MCF 10A (cell line): ENCODE measurements at regions of chr4 and their contacts with region 1.

Region 1: DNA sequence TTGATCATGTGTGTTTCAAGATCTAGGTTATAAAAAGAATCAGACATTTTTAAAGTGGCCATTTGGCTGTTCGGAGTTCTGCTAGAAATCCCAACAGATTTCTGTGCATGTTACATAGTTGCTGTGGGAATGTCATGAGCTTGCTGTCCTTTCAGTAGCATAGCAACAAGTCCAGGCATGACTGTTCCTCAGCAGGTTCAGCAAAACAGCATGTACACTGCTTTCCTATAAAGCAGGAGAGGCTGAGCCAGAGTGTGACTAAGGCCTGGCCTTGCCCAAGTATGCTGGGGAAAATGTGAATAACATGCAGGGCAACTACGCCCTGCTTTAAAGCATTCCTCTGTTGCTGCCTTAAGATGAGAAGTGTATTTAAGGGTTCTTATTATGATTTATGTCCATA is 217.1 kb upstream of the SMIM31 start:
- DNase-seq: peak; percentile 91
- H3K4me3 Mint-ChIP-seq: peak overlapping the region; percentile 12
- H3K27ac Mint-ChIP-seq: peak overlapping the region; percentile 98
- H3K4me1 Mint-ChIP-seq: peaks cover 21% of the 10 kb centered on the region
- H3K27me3 Mint-ChIP-seq: no peaks in the 10 kb centered on the region
- CTCF ChIP-seq: no peak

Region 2: DNA sequence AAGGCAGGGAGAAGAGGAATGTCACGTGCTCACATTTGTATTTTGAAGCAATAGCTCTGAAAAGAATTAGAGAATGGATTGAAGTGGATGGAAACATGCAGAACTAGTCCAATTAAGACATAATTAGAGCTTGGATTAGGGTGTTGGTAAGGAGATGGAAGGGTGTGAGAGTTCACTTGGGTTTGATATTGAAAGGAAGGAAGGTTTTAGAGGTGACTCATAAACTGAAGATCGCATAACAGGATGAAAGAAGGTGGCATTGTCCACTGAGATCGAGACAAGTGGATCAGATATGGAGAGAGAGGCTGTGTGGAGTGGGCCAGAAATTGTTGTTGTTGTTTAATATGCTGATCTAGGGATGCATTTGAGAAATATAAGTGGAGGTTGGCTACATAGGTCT is 26.9 kb before region 1 on chr4:
- CTCF ChIA-PET with region 1: no interaction called
- POLR2A ChIA-PET with region 1: interaction called, 11 read pairs
- intact Hi-C with region 1: loop called (anchors 2 kb)
- DNase-seq: peak; percentile 63
- H3K4me3 Mint-ChIP-seq: no peak overlapping the region
- H3K27ac Mint-ChIP-seq: no peak overlapping the region
- H3K4me1 Mint-ChIP-seq: peaks cover 5% of the 10 kb centered on the region
- H3K27me3 Mint-ChIP-seq: no peaks in the 10 kb centered on the region
- CTCF ChIP-seq: no peak

Region 3: GRCh38 chr4:164572877-164573279 is 36.1 kb after region 1 on chr4:
- CTCF ChIA-PET with region 1: no interaction called
- POLR2A ChIA-PET with region 1: interaction called, 24 read pairs
- intact Hi-C with region 1: no loop called
- DNase-seq: peak; percentile 81
- H3K4me3 Mint-ChIP-seq: no peak overlapping the region
- H3K27ac Mint-ChIP-seq: peak overlapping the region; percentile 80
- H3K4me1 Mint-ChIP-seq: peaks cover 8% of the 10 kb centered on the region
- H3K27me3 Mint-ChIP-seq: no peaks in the 10 kb centered on the region
- CTCF ChIP-seq: no peak

Region 4: GRCh38 chr4:164621886-164622521 is 85.2 kb after region 1 on chr4:
- CTCF ChIA-PET with region 1: no interaction called
- POLR2A ChIA-PET with region 1: interaction called, 18 read pairs
- intact Hi-C with region 1: no loop called
- DNase-seq: peak; percentile 84
- H3K4me3 Mint-ChIP-seq: peak overlapping the region; percentile 12
- H3K27ac Mint-ChIP-seq: peak overlapping the region; percentile 75
- H3K4me1 Mint-ChIP-seq: peaks cover 17% of the 10 kb centered on the region
- H3K27me3 Mint-ChIP-seq: no peaks in the 10 kb centered on the region
- CTCF ChIP-seq: no peak

Region 5: DNA sequence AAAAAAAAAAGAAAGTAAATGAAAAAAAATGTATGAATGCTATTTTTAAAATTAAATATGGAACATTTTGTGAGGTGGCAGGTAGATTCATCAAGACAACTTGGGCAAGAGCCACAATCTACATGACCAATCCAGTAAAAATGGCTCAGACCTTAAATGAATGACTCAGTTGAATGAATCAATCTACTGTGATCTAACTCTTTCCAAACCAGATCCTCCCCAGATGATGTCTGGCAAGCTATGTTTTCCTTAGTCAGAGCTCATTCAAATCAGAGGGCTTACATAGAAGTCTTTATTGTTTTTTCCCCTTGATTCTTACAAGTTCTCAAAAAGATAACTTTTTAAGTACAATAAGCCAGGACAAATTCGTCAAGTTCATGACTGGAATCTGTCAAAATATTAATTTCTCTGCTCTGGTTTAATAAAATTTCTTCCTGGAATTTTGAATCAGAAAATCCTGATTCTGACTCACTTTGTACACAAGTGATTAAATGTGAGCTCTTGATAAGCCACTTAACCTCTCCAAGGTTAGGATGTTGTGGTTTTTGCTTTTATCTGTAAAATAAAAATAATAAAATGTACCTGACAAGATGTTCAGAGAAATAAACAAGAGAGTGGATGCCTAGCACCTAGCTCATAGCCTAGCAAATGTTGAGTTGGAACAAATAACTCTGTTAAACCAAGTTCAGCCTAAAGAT is 111.5 kb after region 1 on chr4:
- CTCF ChIA-PET with region 1: no interaction called
- POLR2A ChIA-PET with region 1: interaction called, 3 read pairs
- intact Hi-C with region 1: loop called (anchors 10 kb)
- DNase-seq: peak; percentile 83
- H3K4me3 Mint-ChIP-seq: no peak overlapping the region
- H3K27ac Mint-ChIP-seq: peak overlapping the region; percentile 75
- H3K4me1 Mint-ChIP-seq: peaks cover 11% of the 10 kb centered on the region
- H3K27me3 Mint-ChIP-seq: no peaks in the 10 kb centered on the region
- CTCF ChIP-seq: no peak